Naive thymus-derived CD4-positive, alpha-beta T cell (primary cell): ENCODE measurements at regions of chr17 and their contacts with region 1.

Region 1: GRCh38 chr17:46002311-46002972 is 3.4 kb downstream of the STH start:
- DNase-seq: peak; percentile 43 to 81 (median 70)
- ATAC-seq: peak; percentile 96
- H3K4me3 ChIP-seq: no peak overlapping the region
- H3K4me3 Mint-ChIP-seq: no peak overlapping the region
- H3K27ac ChIP-seq: no peak overlapping the region
- H3K27ac Mint-ChIP-seq: no peak overlapping the region
- H3K4me1 ChIP-seq: no peaks in the 10 kb centered on the region
- H3K4me1 Mint-ChIP-seq: peaks cover 0 to 4% (median 0%) of the 10 kb centered on the region in 7 donors
- H3K27me3 ChIP-seq: no peaks in the 10 kb centered on the region
- H3K27me3 Mint-ChIP-seq: peaks cover 0 to 5% (median 0%) of the 10 kb centered on the region in 5 donors

Region 2: GRCh38 chr17:45584092-45585036 is 418.1 kb before region 1 on chr17:
- CTCF ChIA-PET with region 1: no interaction called
- POLR2A ChIA-PET with region 1: no interaction called
- intact Hi-C with region 1: loop called in 1 of 2 experiments (anchors 1 kb)
- DNase-seq: peak; percentile 59 to 84 (median 64)
- ATAC-seq: peak; percentile 59
- H3K4me3 ChIP-seq: peak overlapping the region; percentile 81
- H3K4me3 Mint-ChIP-seq: peak overlapping the region; percentile 85 to 99 (median 97)
- H3K27ac ChIP-seq: peak overlapping the region; percentile 85
- H3K27ac Mint-ChIP-seq: peak overlapping the region; percentile 90 to 99 (median 96)
- H3K4me1 ChIP-seq: peaks cover 8 to 11% of the 10 kb centered on the region in 2 donors
- H3K4me1 Mint-ChIP-seq: peaks cover 20 to 52% (median 47%) of the 10 kb centered on the region in 7 donors
- H3K27me3 ChIP-seq: no peaks in the 10 kb centered on the region
- H3K27me3 Mint-ChIP-seq: peaks cover 0 to 2% (median 0%) of the 10 kb centered on the region in 5 donors

Region 3: GRCh38 chr17:46035112-46035818 is 32.8 kb after region 1 on chr17:
- CTCF ChIA-PET with region 1: interaction called, 14 read pairs
- POLR2A ChIA-PET with region 1: no interaction called
- intact Hi-C with region 1: loop called in 1 of 2 experiments (anchors 5 kb)
- DNase-seq: no peak
- ATAC-seq: peak; percentile 36
- H3K4me3 ChIP-seq: no peak overlapping the region
- H3K4me3 Mint-ChIP-seq: no peak overlapping the region
- H3K27ac ChIP-seq: peak overlapping the region; percentile 16
- H3K27ac Mint-ChIP-seq: peak overlapping the region; percentile 29 to 77 (median 53)
- H3K4me1 ChIP-seq: no peaks in the 10 kb centered on the region
- H3K4me1 Mint-ChIP-seq: peaks cover 0 to 11% (median 7%) of the 10 kb centered on the region in 7 donors
- H3K27me3 ChIP-seq: no peaks in the 10 kb centered on the region
- H3K27me3 Mint-ChIP-seq: no peaks in the 10 kb centered on the region

Region 4: DNA sequence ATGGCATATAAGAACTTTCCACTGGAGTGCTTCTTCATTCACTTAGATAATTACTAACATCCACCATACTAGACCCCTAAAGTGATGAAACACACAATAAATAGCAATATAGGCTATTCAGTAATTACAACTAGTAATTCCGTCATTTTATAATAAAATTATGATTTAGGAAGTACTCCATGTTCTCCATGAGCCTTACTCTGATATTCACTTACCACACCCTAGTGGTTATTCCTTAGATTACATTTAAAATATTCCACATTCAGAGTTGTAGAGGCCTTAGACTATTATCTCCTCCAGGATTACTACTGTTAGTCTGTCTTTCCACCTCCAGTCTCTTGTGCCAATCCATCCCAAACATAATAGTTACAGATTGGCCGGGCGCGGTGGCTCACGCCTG is 59.0 kb after region 1 on chr17:
- CTCF ChIA-PET with region 1: interaction called, 3 read pairs
- POLR2A ChIA-PET with region 1: no interaction called
- intact Hi-C with region 1: loop called in 1 of 2 experiments (anchors 1 kb)
- DNase-seq: no peak
- ATAC-seq: peak; percentile 41
- H3K4me3 ChIP-seq: no peak overlapping the region
- H3K4me3 Mint-ChIP-seq: no peak overlapping the region
- H3K27ac ChIP-seq: no peak overlapping the region
- H3K27ac Mint-ChIP-seq: peak overlapping the region in 4 of 9 donors; percentile 22 to 69 (median 44)
- H3K4me1 ChIP-seq: no peaks in the 10 kb centered on the region
- H3K4me1 Mint-ChIP-seq: peaks cover 1 to 59% (median 39%) of the 10 kb centered on the region in 7 donors
- H3K27me3 ChIP-seq: no peaks in the 10 kb centered on the region
- H3K27me3 Mint-ChIP-seq: no peaks in the 10 kb centered on the region